PC-9 (cell line): ENCODE measurements at regions of chr10 and their contacts with region 1.

Region 1: GRCh38 chr10:69769395-69769992 is 32.2 kb upstream of the COL13A1 start:
- DNase-seq: peak; percentile 69 to 81
- H3K4me3 ChIP-seq: no peak overlapping the region
- H3K27ac ChIP-seq: no peak overlapping the region
- H3K4me1 ChIP-seq: peaks cover 14% of the 10 kb centered on the region
- H3K27me3 ChIP-seq: no peaks in the 10 kb centered on the region
- CTCF ChIP-seq: no peak

Region 2: DNA sequence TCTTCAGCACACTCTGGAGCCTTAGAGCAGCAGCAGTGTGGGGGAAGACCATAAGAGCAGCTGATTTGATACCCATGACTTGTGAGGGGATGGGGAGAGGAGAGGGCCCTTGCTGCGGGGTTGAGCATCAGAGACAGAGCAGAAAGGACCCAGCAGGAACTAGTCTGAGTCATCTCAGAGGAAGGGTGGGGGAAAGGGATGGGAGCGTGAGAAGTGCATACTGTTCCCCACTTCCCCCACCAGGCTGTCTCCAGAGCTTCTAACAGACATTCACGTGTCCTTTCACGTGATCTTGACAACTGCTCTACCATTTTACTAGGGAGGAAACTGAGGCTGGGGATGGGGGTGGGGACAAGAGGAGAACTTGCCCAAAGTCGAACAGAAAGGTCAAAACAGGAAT is 100.8 kb before region 1 on chr10:
- CTCF ChIA-PET with region 1: no interaction called
- POLR2A ChIA-PET with region 1: no interaction called
- intact Hi-C with region 1: no loop called
- DNase-seq: no peak
- H3K4me3 ChIP-seq: no peak overlapping the region
- H3K27ac ChIP-seq: no peak overlapping the region
- H3K4me1 ChIP-seq: no peaks in the 10 kb centered on the region
- H3K27me3 ChIP-seq: peaks cover 95% of the 10 kb centered on the region
- CTCF ChIP-seq: no peak

Region 3: GRCh38 chr10:69696073-69696731 is 73.3 kb before region 1 on chr10:
- CTCF ChIA-PET with region 1: no interaction called
- POLR2A ChIA-PET with region 1: no interaction called
- intact Hi-C with region 1: no loop called
- DNase-seq: peak; percentile 66 to 90
- H3K4me3 ChIP-seq: no peak overlapping the region
- H3K27ac ChIP-seq: no peak overlapping the region
- H3K4me1 ChIP-seq: no peaks in the 10 kb centered on the region
- H3K27me3 ChIP-seq: peaks cover 47% of the 10 kb centered on the region
- CTCF ChIP-seq: peak; percentile 85

Region 4: GRCh38 chr10:69786791-69787190 is 17.3 kb after region 1 on chr10:
- CTCF ChIA-PET with region 1: no interaction called
- POLR2A ChIA-PET with region 1: interaction called, 12 read pairs
- intact Hi-C with region 1: no loop called
- DNase-seq: no peak
- H3K4me3 ChIP-seq: no peak overlapping the region
- H3K27ac ChIP-seq: no peak overlapping the region
- H3K4me1 ChIP-seq: no peaks in the 10 kb centered on the region
- H3K27me3 ChIP-seq: peaks cover 46% of the 10 kb centered on the region
- CTCF ChIP-seq: peak; percentile 57